ENCODE measurements at regions of chr6 and their contacts with region 1.

Region 1: GRCh38 chr6:118933855-118934460 is 1.0 kb downstream of the MCM9 start:
- DNase-seq: no peak

Region 2: DNA sequence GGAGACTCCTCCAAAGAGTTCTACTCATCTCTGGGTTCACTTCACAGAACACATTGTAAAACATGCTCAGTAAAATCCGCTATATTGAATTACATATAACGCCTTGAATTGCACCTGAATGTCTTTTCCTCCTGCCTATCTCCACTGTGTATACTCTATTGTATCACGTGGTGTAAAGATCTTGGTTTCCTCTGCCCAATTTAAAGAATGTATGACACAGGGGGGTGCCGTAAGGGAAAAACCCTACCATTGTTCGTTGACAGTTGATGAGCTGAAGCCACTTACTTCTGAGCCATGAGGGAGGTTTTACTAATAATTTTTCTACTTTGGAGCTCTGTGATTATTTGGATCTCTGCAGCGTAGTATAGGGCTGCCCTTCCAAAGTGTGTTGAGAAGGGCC is 34.0 kb before region 1 on chr6:
- intact Hi-C with region 1: loop called in 1 of 2 experiments (anchors 2 kb)
- DNase-seq: no peak

Measured in posterior vena cava (tissue), 2 donors.